Astrocyte of the cerebellum (primary cell): ENCODE measurements at regions of chr13 and their contacts with region 1.

Region 1: DNA sequence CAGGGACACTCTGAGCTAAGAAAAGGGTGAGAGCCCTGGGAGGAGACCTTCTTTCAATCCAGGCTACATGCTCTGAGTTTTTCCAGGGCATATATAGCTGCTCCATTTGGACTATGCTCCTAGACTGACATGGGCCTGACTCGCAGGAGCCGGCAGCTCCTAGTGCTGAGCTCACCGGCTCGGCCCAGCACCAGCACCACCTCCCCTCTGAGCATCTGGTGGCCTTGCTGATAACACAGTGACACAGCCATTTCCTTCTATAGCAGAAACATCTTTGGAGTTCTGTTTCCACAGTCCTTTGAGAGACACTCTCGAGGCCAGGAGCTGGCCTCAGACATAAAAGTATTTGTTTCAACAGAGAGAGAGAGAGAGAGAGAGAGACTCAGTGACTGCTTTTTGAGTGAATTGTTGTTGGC is 184.9 kb downstream of the TM9SF2 start:
- DNase-seq: no peak
- H3K4me3 ChIP-seq: no peak overlapping the region
- CTCF ChIP-seq: no peak

Region 2: DNA sequence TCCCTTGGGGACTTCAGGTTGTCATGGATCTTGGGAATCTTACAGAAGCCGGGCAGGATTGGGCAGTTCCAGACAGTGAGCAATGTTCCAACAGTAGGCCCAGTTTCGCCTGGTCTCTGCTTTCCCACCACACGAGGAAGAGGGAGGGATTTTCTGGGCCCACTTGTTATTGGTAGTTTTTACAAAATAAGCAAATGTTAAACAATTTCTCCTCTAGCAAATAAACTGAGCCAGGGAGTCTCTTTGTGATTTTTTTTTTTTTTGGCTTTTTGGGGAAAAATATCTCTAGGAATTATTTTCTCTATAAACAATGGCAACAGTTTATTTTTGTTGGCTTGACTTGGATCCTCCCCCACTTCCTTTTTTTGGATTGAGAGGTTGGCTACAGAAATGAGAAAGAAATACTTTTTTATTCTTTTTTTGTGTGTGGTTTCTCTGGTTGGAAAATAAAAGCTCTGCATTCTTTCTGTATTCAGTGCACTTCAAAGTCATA is 95.6 kb before region 1 on chr13:
- in situ Hi-C with region 1: loop called (anchors 5 kb)
- DNase-seq: peak; percentile 60
- H3K4me3 ChIP-seq: no peak overlapping the region
- CTCF ChIP-seq: no peak

Region 3: GRCh38 chr13:99738626-99739025 is 52.5 kb after region 1 on chr13:
- in situ Hi-C with region 1: loop called (anchors 5 kb)
- DNase-seq: no peak
- H3K4me3 ChIP-seq: no peak overlapping the region
- CTCF ChIP-seq: no peak